HEK293 (cell line): ENCODE measurements at regions of chr19 and their contacts with region 1.

Region 1: GRCh38 chr19:50669302-50670101 is 20.3 kb downstream of the C19orf81 start:
- H3K4me3 ChIP-seq: no peak overlapping the region
- H3K27ac ChIP-seq: no peak overlapping the region
- H3K4me1 ChIP-seq: no peaks in the 10 kb centered on the region
- CTCF ChIP-seq: peak; percentile 64

Region 2: GRCh38 chr19:50646074-50646807 is 23.3 kb before region 1 on chr19:
- CTCF ChIA-PET with region 1: interaction called, 13 read pairs
- POLR2A ChIA-PET with region 1: no interaction called
- H3K4me3 ChIP-seq: no peak overlapping the region
- H3K27ac ChIP-seq: no peak overlapping the region
- H3K4me1 ChIP-seq: no peaks in the 10 kb centered on the region
- CTCF ChIP-seq: no peak

Region 3: DNA sequence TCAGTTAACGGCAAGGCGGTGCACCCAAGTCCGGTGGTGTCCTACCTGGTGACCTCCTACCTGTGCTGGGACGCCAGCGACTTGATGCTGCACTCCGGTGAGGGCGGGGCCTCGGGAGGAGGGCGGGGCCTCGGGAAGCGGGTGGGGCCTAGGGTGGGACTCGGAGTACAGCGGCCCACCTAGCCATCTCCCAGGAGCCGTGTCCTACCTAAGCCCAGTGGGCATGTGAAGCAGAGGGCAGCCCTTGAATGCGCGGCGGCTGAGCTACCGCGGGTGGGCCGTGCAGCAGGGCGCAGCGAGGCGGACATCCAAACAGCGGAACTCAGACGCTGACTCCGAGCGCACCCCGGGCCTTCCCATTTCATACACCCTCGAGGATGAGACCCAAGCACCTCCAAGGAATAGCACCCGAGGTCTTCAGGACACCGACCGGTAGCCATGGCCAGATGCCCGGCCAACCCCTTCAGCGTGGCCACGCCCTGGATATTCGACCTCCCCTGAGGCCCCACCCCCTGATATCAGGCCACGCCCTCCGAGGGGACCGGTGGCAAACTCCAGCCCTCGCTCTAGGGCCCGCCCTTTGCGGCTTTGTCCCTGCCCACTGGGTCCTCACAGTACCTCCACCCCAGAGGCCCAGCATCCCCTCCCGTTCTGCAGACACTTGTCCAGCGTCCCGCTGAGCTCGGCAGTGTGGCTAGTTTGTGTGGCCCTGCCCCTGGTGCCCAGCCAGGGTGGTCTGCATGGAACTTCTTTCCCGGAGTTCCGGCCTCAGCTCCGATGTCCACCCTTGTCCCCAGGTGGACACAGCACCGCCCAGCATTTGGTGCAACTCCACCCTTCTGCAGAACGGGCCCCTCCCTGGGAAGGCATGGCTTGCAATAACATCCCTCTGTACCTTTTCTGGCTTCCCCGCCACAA is 148.7 kb after region 1 on chr19:
- CTCF ChIA-PET with region 1: no interaction called
- POLR2A ChIA-PET with region 1: no interaction called
- H3K4me3 ChIP-seq: peak overlapping the region; percentile 50
- H3K27ac ChIP-seq: no peak overlapping the region; the same call in 1 of the 2 replicates
- H3K4me1 ChIP-seq: no peaks in the 10 kb centered on the region
- CTCF ChIP-seq: no peak

Region 4: GRCh38 chr19:51122112-51122981 is 452.8 kb after region 1 on chr19:
- CTCF ChIA-PET with region 1: no interaction called
- POLR2A ChIA-PET with region 1: no interaction called
- H3K4me3 ChIP-seq: no peak overlapping the region
- H3K27ac ChIP-seq: no peak overlapping the region
- H3K4me1 ChIP-seq: no peaks in the 10 kb centered on the region
- CTCF ChIP-seq: no peak